ENCODE measurements at regions of chr6 and their contacts with region 1.

Region 1: GRCh38 chr6:165231581-165232561 is 77.5 kb downstream of the C6orf118 start:
- DNase-seq: no peak
- ATAC-seq: peak; percentile 61

Region 2: DNA sequence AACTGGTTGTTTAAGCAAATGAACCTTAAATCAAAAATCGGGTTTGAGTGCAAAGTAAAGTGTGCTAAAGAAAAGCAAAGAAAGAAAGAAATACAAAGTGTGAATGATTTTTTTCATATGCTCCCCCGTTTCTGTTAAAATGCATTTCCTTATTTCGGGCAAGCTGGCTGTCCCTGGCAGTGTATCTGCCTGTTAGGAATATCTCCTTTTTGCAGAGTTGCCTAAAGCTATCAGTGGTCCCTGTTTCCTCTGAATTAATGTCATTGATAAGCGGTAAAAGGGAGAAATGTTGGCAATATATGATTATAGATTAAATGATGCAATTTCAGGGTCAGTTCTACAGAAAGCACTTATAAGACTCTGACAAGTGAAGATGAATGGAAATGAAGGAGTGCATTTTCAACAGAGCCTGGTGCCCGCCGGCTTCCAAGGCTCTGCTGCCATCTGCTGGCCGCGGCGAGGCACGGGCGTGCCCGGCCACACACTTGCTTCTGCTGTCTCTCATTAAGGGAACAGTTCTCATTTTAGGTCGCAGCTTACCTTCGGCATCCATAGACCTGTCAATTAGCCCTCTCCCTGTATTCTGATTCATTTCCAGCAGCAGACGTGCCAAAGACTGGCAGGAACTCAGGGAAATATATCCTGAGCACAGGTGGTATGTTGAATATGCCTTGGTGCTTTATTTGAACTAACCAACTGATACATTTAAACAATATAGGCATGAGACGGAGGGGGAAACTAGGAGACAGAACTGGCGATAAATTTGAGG is 304.4 kb before region 1 on chr6:
- intact Hi-C with region 1: loop called (anchors 5 kb)
- DNase-seq: peak; percentile 70
- ATAC-seq: peak; percentile 92